CD8-positive, alpha-beta T cell (primary cell): ENCODE measurements at regions of chr16 and their contacts with region 1.

Region 1: GRCh38 chr16:27179500-27180072 is 23.7 kb upstream of the KDM8 start:
- DNase-seq: peak; percentile 78 to 94 (median 88)
- ATAC-seq: peak; percentile 100
- H3K4me3 ChIP-seq: no peak overlapping the region
- H3K4me3 Mint-ChIP-seq: peak overlapping the region; percentile 9
- H3K27ac ChIP-seq: no peak overlapping the region
- H3K27ac Mint-ChIP-seq: peak overlapping the region; percentile 28
- H3K4me1 ChIP-seq: peaks cover 22% of the 10 kb centered on the region
- H3K4me1 Mint-ChIP-seq: peaks cover 24% of the 10 kb centered on the region
- H3K27me3 ChIP-seq: no peaks in the 10 kb centered on the region
- H3K27me3 Mint-ChIP-seq: no peaks in the 10 kb centered on the region
- CTCF ChIP-seq: peak; percentile 92

Region 2: DNA sequence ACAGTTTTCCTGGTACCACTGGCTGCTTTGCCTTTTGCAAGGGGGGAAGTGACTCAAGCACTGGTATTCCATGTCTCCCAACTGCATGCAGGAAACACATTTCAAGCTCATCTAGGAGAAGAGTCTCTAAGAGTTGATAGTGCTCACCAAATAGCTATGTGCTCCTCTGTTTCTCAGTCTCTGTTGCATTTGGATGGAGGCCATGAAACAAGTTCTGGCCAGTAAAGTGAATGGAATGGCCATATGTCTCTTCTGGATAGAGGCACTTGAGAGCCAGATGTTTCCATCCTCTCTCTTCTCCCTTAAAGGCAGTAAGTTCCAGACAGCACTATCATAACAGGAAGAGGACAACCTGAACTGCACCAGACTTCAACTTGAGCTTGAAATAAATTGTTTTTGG is 52.3 kb before region 1 on chr16:
- CTCF ChIA-PET with region 1: no interaction called
- POLR2A ChIA-PET with region 1: no interaction called
- intact Hi-C with region 1: no loop called
- DNase-seq: no peak
- ATAC-seq: no peak
- H3K4me3 ChIP-seq: no peak overlapping the region
- H3K4me3 Mint-ChIP-seq: no peak overlapping the region
- H3K27ac ChIP-seq: no peak overlapping the region
- H3K27ac Mint-ChIP-seq: no peak overlapping the region
- H3K4me1 ChIP-seq: no peaks in the 10 kb centered on the region
- H3K4me1 Mint-ChIP-seq: no peaks in the 10 kb centered on the region
- H3K27me3 ChIP-seq: no peaks in the 10 kb centered on the region
- H3K27me3 Mint-ChIP-seq: peaks cover 6% of the 10 kb centered on the region
- CTCF ChIP-seq: no peak

Region 3: GRCh38 chr16:27154705-27155521 is 24.7 kb before region 1 on chr16:
- CTCF ChIA-PET with region 1: interaction called, 14 read pairs
- POLR2A ChIA-PET with region 1: interaction called, 5 read pairs
- intact Hi-C with region 1: no loop called
- DNase-seq: peak; percentile 39 to 83 (median 71)
- ATAC-seq: peak; percentile 94
- H3K4me3 ChIP-seq: no peak overlapping the region
- H3K4me3 Mint-ChIP-seq: no peak overlapping the region
- H3K27ac ChIP-seq: no peak overlapping the region
- H3K27ac Mint-ChIP-seq: no peak overlapping the region
- H3K4me1 ChIP-seq: peaks cover 9% of the 10 kb centered on the region
- H3K4me1 Mint-ChIP-seq: peaks cover 8% of the 10 kb centered on the region
- H3K27me3 ChIP-seq: no peaks in the 10 kb centered on the region
- H3K27me3 Mint-ChIP-seq: no peaks in the 10 kb centered on the region
- CTCF ChIP-seq: peak; percentile 99

Region 4: DNA sequence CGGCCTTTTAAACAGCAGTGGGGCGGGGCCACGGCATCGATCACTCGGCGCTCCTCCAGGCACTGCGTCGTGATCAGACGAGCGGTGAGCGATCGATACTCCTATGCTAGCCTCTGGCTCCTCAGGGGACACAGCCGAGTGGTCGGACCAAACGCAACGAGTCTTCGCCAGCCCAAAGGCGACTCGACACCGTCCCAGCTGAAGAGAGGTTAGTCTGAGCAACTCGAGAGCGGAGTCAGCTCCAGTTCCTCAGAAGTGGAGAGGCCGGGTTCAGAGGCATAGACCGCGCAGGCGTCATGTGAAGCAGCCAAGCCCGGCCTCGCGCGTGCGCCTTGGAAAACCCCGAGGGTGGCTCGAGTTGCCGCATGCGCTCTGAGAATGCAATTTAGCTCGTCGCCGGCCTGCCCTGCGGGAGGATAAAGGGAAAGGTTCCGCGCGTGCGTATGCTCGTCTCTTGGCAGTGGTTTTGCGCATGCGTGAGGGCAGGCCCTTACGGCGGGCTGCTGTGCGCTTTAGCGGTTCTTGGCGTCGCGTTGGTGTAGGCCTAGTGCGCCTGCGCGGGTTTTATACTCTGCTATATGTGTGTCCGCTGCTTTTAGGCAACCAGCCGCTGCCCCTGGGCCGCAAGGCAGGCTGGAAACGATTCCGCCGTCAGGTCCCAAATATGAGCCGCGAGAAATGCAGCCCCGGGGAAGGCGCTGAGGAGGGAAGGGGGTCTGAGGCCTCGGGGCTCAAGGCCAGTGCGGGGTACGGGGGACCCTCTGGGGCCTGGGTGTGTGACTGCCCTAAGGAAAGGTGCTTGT is 24.0 kb after region 1 on chr16 and contains the start of gene KDM8:
- CTCF ChIA-PET with region 1: interaction called, 59 read pairs
- POLR2A ChIA-PET with region 1: interaction called, 18 read pairs
- intact Hi-C with region 1: loop called in 1 of 2 experiments (anchors 1 kb)
- DNase-seq: peak; percentile 99 to 100 (median 100)
- ATAC-seq: peak; percentile 85
- H3K4me3 ChIP-seq: peak within 1 kb of the TSS; percentile 83 to 93
- H3K4me3 Mint-ChIP-seq: peak within 1 kb of the TSS; percentile 96
- H3K27ac ChIP-seq: peak within 1 kb of the TSS; percentile 83 to 97
- H3K27ac Mint-ChIP-seq: peak within 1 kb of the TSS; percentile 99
- H3K4me1 ChIP-seq: peaks cover 54% of the 10 kb centered on the region
- H3K4me1 Mint-ChIP-seq: peaks cover 61% of the 10 kb centered on the region
- H3K27me3 ChIP-seq: no peaks in the 10 kb centered on the region
- H3K27me3 Mint-ChIP-seq: no peaks in the 10 kb centered on the region
- CTCF ChIP-seq: no peak
- total RNA-seq, gene KDM8: 17.6 to 22.6 TPM

Region 5: DNA sequence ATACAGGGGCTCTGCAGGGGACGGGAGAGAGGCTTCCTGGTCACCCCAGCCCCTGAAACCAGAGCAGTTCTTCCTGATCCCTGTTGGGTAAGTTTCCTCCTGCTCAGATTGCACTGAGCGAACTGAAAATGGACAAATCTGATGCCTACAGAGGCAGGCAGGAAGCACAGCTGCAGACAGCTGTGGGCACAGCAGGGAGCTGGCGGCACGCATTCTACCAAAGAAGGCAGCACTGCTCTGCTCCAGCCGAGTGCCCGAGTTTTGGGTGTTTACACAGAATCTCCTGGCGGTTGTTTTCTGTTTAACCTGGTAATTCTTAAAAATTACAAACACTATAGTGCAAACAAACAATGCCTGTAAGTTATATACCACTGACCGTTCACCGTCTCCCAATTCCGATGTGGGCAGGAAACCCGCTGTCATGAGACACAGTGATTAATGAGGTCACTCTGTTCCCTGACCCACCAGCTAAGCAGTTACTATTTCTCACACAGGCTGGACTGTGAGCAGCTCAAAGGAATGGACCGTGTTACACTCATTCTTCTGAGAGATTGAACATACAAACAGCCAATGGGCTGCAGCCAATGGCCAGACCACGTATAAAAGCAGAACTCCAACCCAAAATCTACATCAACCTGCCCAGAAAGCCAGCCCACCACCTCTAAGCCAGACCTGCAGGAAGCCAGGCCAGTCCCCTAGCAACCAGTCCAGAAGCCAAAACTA is 63.4 kb after region 1 on chr16:
- CTCF ChIA-PET with region 1: interaction called, 64 read pairs
- POLR2A ChIA-PET with region 1: no interaction called
- intact Hi-C with region 1: no loop called
- DNase-seq: peak in 6 of 9 experiments; percentile 40 to 63 (median 46)
- ATAC-seq: peak; percentile 66
- H3K4me3 ChIP-seq: no peak overlapping the region
- H3K4me3 Mint-ChIP-seq: peak overlapping the region; percentile 50
- H3K27ac ChIP-seq: peak overlapping the region in 1 of 2 experiments; percentile 54
- H3K27ac Mint-ChIP-seq: peak overlapping the region; percentile 53
- H3K4me1 ChIP-seq: peaks cover 26% of the 10 kb centered on the region
- H3K4me1 Mint-ChIP-seq: peaks cover 75% of the 10 kb centered on the region
- H3K27me3 ChIP-seq: no peaks in the 10 kb centered on the region
- H3K27me3 Mint-ChIP-seq: no peaks in the 10 kb centered on the region
- CTCF ChIP-seq: no peak

Region 6: GRCh38 chr16:27318392-27319226 is 139.0 kb after region 1 on chr16:
- CTCF ChIA-PET with region 1: interaction called, 10 read pairs
- POLR2A ChIA-PET with region 1: interaction called, 8 read pairs
- intact Hi-C with region 1: loop called (anchors 5 kb)
- DNase-seq: peak; percentile 10 to 76 (median 61)
- ATAC-seq: peak; percentile 67
- H3K4me3 ChIP-seq: peak overlapping the region; percentile 12 to 25
- H3K4me3 Mint-ChIP-seq: peak overlapping the region; percentile 74
- H3K27ac ChIP-seq: peak overlapping the region; percentile 28 to 87
- H3K27ac Mint-ChIP-seq: peak overlapping the region; percentile 98
- H3K4me1 ChIP-seq: peaks cover 75% of the 10 kb centered on the region
- H3K4me1 Mint-ChIP-seq: peaks cover 73% of the 10 kb centered on the region
- H3K27me3 ChIP-seq: no peaks in the 10 kb centered on the region
- H3K27me3 Mint-ChIP-seq: no peaks in the 10 kb centered on the region
- CTCF ChIP-seq: no peak

Region 7: GRCh38 chr16:27408012-27408601 is 228.5 kb after region 1 on chr16:
- CTCF ChIA-PET with region 1: interaction called, 13 read pairs
- POLR2A ChIA-PET with region 1: no interaction called
- intact Hi-C with region 1: no loop called
- DNase-seq: peak in 4 of 9 experiments; percentile 51 to 73 (median 56)
- ATAC-seq: peak; percentile 52
- H3K4me3 ChIP-seq: peak overlapping the region; percentile 2 to 11
- H3K4me3 Mint-ChIP-seq: peak overlapping the region; percentile 97
- H3K27ac ChIP-seq: peak overlapping the region; percentile 17 to 66
- H3K27ac Mint-ChIP-seq: peak overlapping the region; percentile 91
- H3K4me1 ChIP-seq: peaks cover 63% of the 10 kb centered on the region
- H3K4me1 Mint-ChIP-seq: peaks cover 85% of the 10 kb centered on the region
- H3K27me3 ChIP-seq: no peaks in the 10 kb centered on the region
- H3K27me3 Mint-ChIP-seq: no peaks in the 10 kb centered on the region
- CTCF ChIP-seq: no peak

Region 8: GRCh38 chr16:27461483-27462171 is 282.0 kb after region 1 on chr16:
- CTCF ChIA-PET with region 1: interaction called, 9 read pairs
- POLR2A ChIA-PET with region 1: interaction called, 3 read pairs
- intact Hi-C with region 1: loop called (anchors 1 kb)
- DNase-seq: no peak
- ATAC-seq: no peak
- H3K4me3 ChIP-seq: no peak overlapping the region
- H3K4me3 Mint-ChIP-seq: peak overlapping the region; percentile 32
- H3K27ac ChIP-seq: no peak overlapping the region
- H3K27ac Mint-ChIP-seq: peak overlapping the region; percentile 69
- H3K4me1 ChIP-seq: peaks cover 76% of the 10 kb centered on the region
- H3K4me1 Mint-ChIP-seq: peaks cover 79% of the 10 kb centered on the region
- H3K27me3 ChIP-seq: no peaks in the 10 kb centered on the region
- H3K27me3 Mint-ChIP-seq: no peaks in the 10 kb centered on the region
- CTCF ChIP-seq: no peak